ENCODE measurements at regions of chr11 and their contacts with region 1.

Region 1: GRCh38 chr11:43419460-43419859 is 60.7 kb downstream of the TTC17 start:
- DNase-seq: no peak
- ATAC-seq: no peak

Region 2: GRCh38 chr11:43327987-43328386 is 91.5 kb before region 1 on chr11:
- intact Hi-C with region 1: loop called (anchors 10 kb)
- DNase-seq: no peak
- ATAC-seq: no peak

Measured in Right ventricle myocardium inferior (tissue), 1 donor.